ENCODE measurements at regions of chr3 and their contacts with region 1.

Region 1: GRCh38 chr3:146503461-146504202 is 34.3 kb upstream of the PLSCR2 start:
- DNase-seq: no peak
- H3K4me3 ChIP-seq: no peak overlapping the region
- H3K4me3 Mint-ChIP-seq: no peak overlapping the region
- H3K27ac ChIP-seq: no peak overlapping the region
- H3K27ac Mint-ChIP-seq: peak overlapping the region in 1 of 7 donors; percentile 46
- H3K4me1 ChIP-seq: peaks cover 17 to 23% of the 10 kb centered on the region in 2 donors
- H3K4me1 Mint-ChIP-seq: peaks cover 25% of the 10 kb centered on the region
- H3K27me3 ChIP-seq: no peaks in the 10 kb centered on the region
- H3K27me3 Mint-ChIP-seq: no peaks in the 10 kb centered on the region
- CTCF ChIP-seq: no peak

Region 2: GRCh38 chr3:146544002-146544928 is 40.6 kb after region 1 on chr3 and contains the start of gene PLSCR1:
- intact Hi-C with region 1: loop called in 1 of 2 experiments (anchors 1 kb)
- DNase-seq: peak; percentile 97 to 98 (median 98)
- H3K4me3 ChIP-seq: peak within 1 kb of the TSS; percentile 62 to 95 (median 93)
- H3K4me3 Mint-ChIP-seq: peak within 1 kb of the TSS; percentile 93 to 99
- H3K27ac ChIP-seq: peak within 1 kb of the TSS; percentile 93 to 100
- H3K27ac Mint-ChIP-seq: peak within 1 kb of the TSS; percentile 95 to 99 (median 97)
- H3K4me1 ChIP-seq: peaks cover 46 to 50% of the 10 kb centered on the region in 2 donors
- H3K4me1 Mint-ChIP-seq: peaks cover 44% of the 10 kb centered on the region
- H3K27me3 ChIP-seq: no peaks in the 10 kb centered on the region
- H3K27me3 Mint-ChIP-seq: peaks cover 0 to 2% (median 0%) of the 10 kb centered on the region in 3 donors
- CTCF ChIP-seq: no peak
- polyA plus RNA-seq, gene PLSCR1: 103 to 221 (median 127) TPM

Region 3: DNA sequence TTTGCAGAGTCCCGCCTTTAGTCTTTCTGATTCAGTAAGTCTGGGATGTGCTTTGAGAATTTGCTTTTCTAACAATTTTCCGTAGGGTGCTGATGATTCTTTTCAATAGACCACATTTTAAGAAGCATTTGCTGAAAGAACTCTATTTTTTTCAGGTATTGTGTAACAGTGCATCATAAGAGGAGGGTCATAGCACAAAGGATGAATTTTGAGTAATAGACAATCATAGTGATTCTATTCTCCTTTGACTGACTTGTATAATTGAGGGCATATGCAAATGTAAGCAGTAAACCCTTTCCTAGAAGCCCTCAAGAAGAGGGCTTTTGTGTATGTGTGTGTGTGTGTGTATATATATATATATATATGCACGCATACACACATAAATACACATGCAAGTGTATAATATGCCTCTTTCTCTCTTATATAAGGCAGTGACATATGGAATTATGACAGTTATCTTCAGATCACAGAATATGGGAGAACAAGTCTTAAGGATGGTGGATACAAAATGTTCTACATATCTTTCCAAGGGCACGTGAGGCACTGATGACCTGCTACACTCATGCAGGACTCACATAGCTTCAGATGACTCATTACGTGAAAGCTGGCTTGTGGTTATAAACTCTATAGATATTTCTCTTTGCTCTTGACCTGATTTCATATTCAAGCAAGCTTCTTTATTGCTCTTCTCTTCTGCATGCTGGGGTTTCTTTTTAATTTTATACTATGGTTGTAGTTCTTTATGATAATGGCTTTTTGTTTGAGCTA is 47.3 kb after region 1 on chr3:
- intact Hi-C with region 1: loop called in 1 of 2 experiments (anchors 10 kb)
- DNase-seq: peak; percentile 59 to 75 (median 74)
- H3K4me3 ChIP-seq: peak overlapping the region in 1 of 3 experiments; percentile 33
- H3K4me3 Mint-ChIP-seq: no peak overlapping the region
- H3K27ac ChIP-seq: peak overlapping the region in 1 of 2 donors; percentile 65
- H3K27ac Mint-ChIP-seq: peak overlapping the region in 6 of 7 donors; percentile 10 to 84 (median 74)
- H3K4me1 ChIP-seq: peaks cover 33 to 40% of the 10 kb centered on the region in 2 donors
- H3K4me1 Mint-ChIP-seq: peaks cover 37% of the 10 kb centered on the region
- H3K27me3 ChIP-seq: no peaks in the 10 kb centered on the region
- H3K27me3 Mint-ChIP-seq: no peaks in the 10 kb centered on the region
- CTCF ChIP-seq: no peak

Measured in CD14-positive monocyte (primary cell).